ENCODE measurements at regions of chr5 and their contacts with region 1.

Region 1: DNA sequence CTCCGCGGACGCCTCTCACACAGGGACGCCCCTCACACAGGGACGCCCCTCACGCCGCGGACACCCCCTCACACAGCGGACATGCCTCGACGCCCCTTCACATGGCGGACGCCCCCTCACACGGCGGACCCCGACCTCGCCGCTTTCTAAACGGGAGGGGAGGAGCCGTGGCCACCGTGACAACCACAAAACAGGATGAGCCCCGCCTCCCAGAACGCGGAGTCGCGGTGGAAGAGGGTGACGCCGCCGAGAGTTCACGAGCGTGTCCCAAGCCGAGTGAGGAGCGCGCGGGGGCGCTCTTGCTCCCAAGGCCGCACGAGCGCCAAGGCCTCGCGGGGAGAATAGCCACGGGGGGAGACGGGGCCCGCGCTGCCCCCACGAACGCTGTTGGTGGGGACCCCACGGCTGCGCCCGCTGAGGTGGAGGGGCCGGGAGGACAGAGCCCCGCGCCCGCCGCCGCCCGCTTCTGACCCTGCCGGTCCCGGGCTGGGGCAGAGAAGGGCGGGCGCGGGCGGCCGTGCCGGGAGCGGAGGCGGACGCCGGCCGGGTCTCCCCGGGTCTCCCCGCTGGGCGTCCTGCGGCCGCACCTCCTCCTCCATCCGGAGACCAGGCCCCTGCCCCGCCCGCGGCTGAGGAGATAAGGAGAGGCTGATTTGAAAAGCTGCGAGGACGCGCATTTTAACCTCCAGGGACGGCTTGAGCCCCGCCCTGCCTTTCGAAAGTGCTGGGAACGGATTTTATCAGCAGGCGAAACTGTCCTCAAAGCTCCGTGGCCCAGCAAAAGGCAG is 3.9 kb upstream of the NKD2 start:
- H3K4me3 ChIP-seq: peak overlapping the region; percentile 38
- H3K27ac ChIP-seq: peak overlapping the region; percentile 63; the same call in 1 of the 2 replicates
- H3K4me1 ChIP-seq: peaks cover 19% of the 10 kb centered on the region
- CTCF ChIP-seq: peak; percentile 90

Region 2: GRCh38 chr5:1021136-1021968 is 16.7 kb after region 1 on chr5:
- CTCF ChIA-PET with region 1: interaction called, 51 read pairs
- POLR2A ChIA-PET with region 1: interaction called, 3 read pairs
- H3K4me3 ChIP-seq: no peak overlapping the region
- H3K27ac ChIP-seq: no peak overlapping the region
- H3K4me1 ChIP-seq: no peaks in the 10 kb centered on the region
- CTCF ChIP-seq: no peak

Measured in HEK293 (cell line).